Transverse colon (tissue), 4 donors: ENCODE measurements at regions of chr14 and their contacts with region 1.

Region 1: GRCh38 chr14:34237081-34237480 is 225.0 kb downstream of the SPTSSA start:
- DNase-seq: no peak
- H3K4me3 ChIP-seq: no peak overlapping the region
- H3K27ac ChIP-seq: peak overlapping the region in 2 of 4 donors; percentile 28 to 52
- H3K4me1 ChIP-seq: peaks cover 0 to 31% (median 16%) of the 10 kb centered on the region in 4 donors
- H3K27me3 ChIP-seq: no peaks in the 10 kb centered on the region
- CTCF ChIP-seq: no peak
- EP300 ChIP-seq: no peak
- POLR2A ChIP-seq: no peak

Region 2: DNA sequence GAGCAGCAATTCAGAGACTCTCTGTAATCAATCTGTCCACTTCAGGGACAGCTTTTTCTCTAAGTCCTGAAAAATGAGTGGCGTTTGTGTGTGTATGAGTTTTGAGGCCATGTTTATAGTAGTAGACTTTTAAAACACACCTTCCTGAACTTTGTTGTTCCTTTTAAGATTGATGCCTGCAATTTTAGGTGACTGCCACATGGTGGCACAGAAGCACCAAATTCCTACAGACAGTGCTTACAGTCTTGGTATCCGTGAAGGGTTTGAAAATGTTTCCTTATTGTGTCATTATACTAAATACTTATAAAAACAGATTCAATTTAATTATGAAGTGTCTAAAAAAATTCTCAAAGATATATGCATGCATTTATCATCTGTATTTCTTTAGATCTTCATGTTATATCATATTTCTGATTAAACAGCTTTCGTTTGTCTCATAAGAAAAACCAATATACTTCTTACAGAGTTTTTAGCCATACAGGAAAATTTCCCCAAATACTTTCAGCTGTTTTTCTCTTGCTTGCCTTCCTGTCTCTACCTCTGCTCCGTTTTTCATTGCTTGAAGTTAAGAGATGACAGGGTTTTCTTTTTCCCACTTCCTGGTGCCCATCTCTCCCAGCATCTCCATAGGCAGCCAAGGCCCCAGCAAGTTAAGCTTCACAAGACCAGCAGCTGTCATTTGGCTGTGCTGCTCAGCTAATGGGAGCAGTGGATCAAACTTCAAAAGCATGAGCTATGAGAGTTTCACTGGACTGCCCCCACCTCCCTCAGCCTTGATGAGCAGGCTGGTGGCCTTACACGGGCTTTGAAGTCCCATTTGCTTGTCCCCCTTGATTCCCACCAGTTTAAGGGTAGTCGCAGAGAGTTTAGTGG is 1648.4 kb before region 1 on chr14:
- in situ Hi-C with region 1: no loop called
- intact Hi-C with region 1: loop called (anchors 5 kb)
- DNase-seq: no peak
- H3K4me3 ChIP-seq: no peak overlapping the region
- H3K27ac ChIP-seq: no peak overlapping the region
- H3K4me1 ChIP-seq: no peaks in the 10 kb centered on the region
- H3K27me3 ChIP-seq: no peaks in the 10 kb centered on the region
- CTCF ChIP-seq: peak; percentile 34 to 55 (median 48)
- EP300 ChIP-seq: no peak
- POLR2A ChIP-seq: no peak

Region 3: GRCh38 chr14:33908540-33909223 is 328.4 kb before region 1 on chr14:
- in situ Hi-C with region 1: no loop called
- intact Hi-C with region 1: no loop called
- DNase-seq: peak; percentile 47
- H3K4me3 ChIP-seq: peak overlapping the region in 1 of 4 donors; percentile 7
- H3K27ac ChIP-seq: peak overlapping the region; percentile 81 to 84 (median 82)
- H3K4me1 ChIP-seq: peaks cover 0 to 14% (median 4%) of the 10 kb centered on the region in 4 donors
- H3K27me3 ChIP-seq: no peaks in the 10 kb centered on the region
- CTCF ChIP-seq: peak in 4 of 5 experiments; percentile 42 to 70 (median 50)
- EP300 ChIP-seq: no peak
- POLR2A ChIP-seq: no peak